ENCODE measurements at regions of chr14 and their contacts with region 1.

Region 1: GRCh38 chr14:61537563-61538463 is 157.5 kb upstream of the HIF1A start:
- DNase-seq: no peak
- H3K4me3 ChIP-seq: no peak overlapping the region
- H3K27ac ChIP-seq: no peak overlapping the region
- H3K4me1 ChIP-seq: no peaks in the 10 kb centered on the region
- H3K27me3 ChIP-seq: no peaks in the 10 kb centered on the region
- CTCF ChIP-seq: no peak
- EP300 ChIP-seq: no peak
- POLR2A ChIP-seq: no peak

Region 2: DNA sequence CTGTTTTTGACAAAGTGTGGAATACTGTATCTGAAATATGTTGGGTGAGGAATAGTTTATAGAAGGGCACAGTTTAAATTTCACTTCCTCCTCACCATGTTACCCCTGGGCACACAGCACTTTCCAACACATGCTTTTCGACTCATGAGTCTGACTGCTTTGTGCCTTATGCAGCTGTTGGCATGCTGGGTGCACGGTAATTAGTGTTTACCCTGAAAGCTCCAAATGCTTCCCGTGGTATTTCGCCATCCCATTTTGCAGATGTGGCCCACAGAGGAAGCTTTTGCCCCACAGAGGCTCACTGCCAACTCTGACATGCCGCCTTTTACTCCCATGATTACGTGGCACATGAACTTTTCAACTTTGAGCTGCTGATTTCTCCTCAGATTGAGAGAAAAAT is 47.9 kb before region 1 on chr14:
- intact Hi-C with region 1: loop called in 1 of 4 experiments (anchors 10 kb)
- DNase-seq: no peak
- H3K4me3 ChIP-seq: no peak overlapping the region
- H3K27ac ChIP-seq: no peak overlapping the region
- H3K4me1 ChIP-seq: no peaks in the 10 kb centered on the region
- H3K27me3 ChIP-seq: no peaks in the 10 kb centered on the region
- CTCF ChIP-seq: no peak
- EP300 ChIP-seq: no peak
- POLR2A ChIP-seq: no peak

Region 3: DNA sequence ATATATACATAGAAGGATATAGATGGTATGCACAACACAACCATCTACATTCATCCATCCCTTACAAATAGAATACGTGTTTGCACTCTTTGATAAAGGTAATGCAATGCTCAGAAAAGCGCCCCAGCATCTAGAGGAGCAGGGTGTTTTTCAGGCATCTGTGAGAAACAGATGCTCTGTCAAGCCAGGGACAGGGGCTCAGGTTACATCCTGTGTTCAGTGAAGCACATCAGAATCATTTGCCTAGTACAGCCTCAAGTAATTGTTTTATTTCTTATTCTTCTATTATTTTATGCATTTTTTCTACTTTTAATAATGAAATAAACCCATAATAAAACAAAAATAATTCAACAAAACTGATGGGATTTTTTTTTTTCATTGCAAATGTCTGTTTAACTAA is 107.0 kb after region 1 on chr14:
- intact Hi-C with region 1: no loop called
- DNase-seq: no peak
- H3K4me3 ChIP-seq: no peak overlapping the region
- H3K27ac ChIP-seq: no peak overlapping the region
- H3K4me1 ChIP-seq: no peaks in the 10 kb centered on the region
- H3K27me3 ChIP-seq: no peaks in the 10 kb centered on the region
- CTCF ChIP-seq: no peak
- EP300 ChIP-seq: no peak
- POLR2A ChIP-seq: no peak

Region 4: DNA sequence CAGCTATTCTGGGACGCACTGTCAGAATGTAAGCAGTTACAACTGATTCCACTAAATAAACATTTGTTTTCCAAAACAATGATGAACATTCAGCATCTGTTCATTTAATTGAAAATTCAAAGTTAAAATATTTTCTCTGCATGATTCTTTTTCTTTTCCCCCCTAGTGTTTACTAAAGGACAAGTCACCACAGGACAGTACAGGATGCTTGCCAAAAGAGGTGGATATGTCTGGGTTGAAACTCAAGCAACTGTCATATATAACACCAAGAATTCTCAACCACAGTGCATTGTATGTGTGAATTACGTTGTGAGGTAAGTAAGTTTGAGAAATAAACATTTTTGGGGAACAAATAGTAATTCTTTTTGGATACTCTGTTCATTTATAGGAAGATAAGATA is 196.2 kb after region 1 on chr14:
- intact Hi-C with region 1: no loop called
- DNase-seq: no peak
- H3K4me3 ChIP-seq: no peak overlapping the region
- H3K27ac ChIP-seq: no peak overlapping the region
- H3K4me1 ChIP-seq: no peaks in the 10 kb centered on the region
- H3K27me3 ChIP-seq: no peaks in the 10 kb centered on the region
- CTCF ChIP-seq: no peak
- EP300 ChIP-seq: no peak
- POLR2A ChIP-seq: no peak

Measured in ovary (tissue), 10 donors.